ENCODE measurements at regions of chr12 and their contacts with region 1.

Region 1: DNA sequence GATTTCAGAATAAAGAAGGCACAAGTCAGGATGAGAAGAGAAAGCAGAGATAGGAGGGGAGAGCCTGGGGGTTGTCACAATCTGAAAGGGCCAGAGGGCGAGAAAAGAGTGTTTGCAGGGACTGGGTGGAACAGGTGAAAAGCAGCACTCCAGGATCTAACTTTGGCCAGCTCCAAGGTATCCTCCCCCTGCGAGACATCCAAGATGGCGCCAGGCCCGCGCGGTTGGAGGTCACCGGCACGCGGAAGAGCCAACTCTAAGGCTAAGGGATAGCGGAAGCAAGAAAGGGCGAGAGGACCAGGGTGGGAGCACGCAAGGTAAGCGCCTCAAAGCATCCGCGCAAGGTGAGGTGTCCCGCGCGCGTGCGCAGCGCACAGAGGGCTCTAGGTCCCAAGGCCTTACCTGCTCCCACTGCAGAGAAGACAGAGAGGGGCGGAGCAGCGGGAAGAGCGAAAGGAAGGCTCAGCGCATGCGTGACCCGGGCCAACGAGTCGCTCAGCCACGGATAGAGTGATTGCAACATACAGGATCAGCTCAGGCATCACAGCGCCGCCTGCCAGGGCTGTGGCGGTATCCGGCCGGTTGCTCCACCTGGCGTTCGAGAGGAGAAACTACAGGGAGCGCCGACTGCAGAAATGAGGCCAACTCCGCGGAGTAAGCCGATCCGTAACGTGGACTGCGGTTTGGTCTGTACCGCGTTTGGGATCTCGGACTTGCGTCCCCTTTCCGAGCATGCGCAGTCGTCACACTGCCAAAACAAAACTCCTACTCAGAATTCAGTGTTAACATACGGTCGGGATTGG is at the start of gene ATP5MC2:
- DNase-seq: peak; percentile 96 to 98 (median 98)
- ATAC-seq: peak; percentile 96
- H3K4me3 ChIP-seq: peak within 1 kb of the TSS; percentile 38
- H3K4me1 ChIP-seq: peaks cover 19% of the 10 kb centered on the region
- CTCF ChIP-seq: peak; percentile 97
- total RNA-seq, gene ATP5MC2: 328 to 354 (median 349) TPM

Region 2: GRCh38 chr12:53543539-53543938 is 132.3 kb before region 1 on chr12:
- intact Hi-C with region 1: loop called in 1 of 2 experiments (anchors 10 kb)
- DNase-seq: peak in 2 of 3 donors; percentile 57 to 68
- ATAC-seq: peak; percentile 90
- H3K4me3 ChIP-seq: no peak overlapping the region
- H3K4me1 ChIP-seq: peaks cover 9% of the 10 kb centered on the region
- CTCF ChIP-seq: peak; percentile 55

Region 3: GRCh38 chr12:53551889-53552291 is 124.0 kb before region 1 on chr12:
- intact Hi-C with region 1: loop called (anchors 10 kb)
- DNase-seq: no peak
- ATAC-seq: no peak
- H3K4me3 ChIP-seq: no peak overlapping the region
- H3K4me1 ChIP-seq: no peaks in the 10 kb centered on the region
- CTCF ChIP-seq: no peak

Measured in mucosa of descending colon (tissue), 3 donors.